Aorta (tissue), 5 donors: ENCODE measurements at regions of chr9 and their contacts with region 1.

Region 1: GRCh38 chr9:38768351-38768761 is 48.4 kb upstream of the FAM240B start:
- DNase-seq: no peak
- ATAC-seq: no peak
- H3K4me3 ChIP-seq: no peak overlapping the region
- H3K27ac ChIP-seq: no peak overlapping the region
- H3K4me1 ChIP-seq: no peaks in the 10 kb centered on the region
- H3K27me3 ChIP-seq: no peaks in the 10 kb centered on the region

Region 2: GRCh38 chr9:37984672-37985611 is 783.4 kb before region 1 on chr9:
- intact Hi-C with region 1: no loop called
- DNase-seq: peak in 1 of 2 donors; percentile 76
- ATAC-seq: peak; percentile 3
- H3K4me3 ChIP-seq: no peak overlapping the region
- H3K27ac ChIP-seq: no peak overlapping the region
- H3K4me1 ChIP-seq: no peaks in the 10 kb centered on the region
- H3K27me3 ChIP-seq: no peaks in the 10 kb centered on the region

Region 3: DNA sequence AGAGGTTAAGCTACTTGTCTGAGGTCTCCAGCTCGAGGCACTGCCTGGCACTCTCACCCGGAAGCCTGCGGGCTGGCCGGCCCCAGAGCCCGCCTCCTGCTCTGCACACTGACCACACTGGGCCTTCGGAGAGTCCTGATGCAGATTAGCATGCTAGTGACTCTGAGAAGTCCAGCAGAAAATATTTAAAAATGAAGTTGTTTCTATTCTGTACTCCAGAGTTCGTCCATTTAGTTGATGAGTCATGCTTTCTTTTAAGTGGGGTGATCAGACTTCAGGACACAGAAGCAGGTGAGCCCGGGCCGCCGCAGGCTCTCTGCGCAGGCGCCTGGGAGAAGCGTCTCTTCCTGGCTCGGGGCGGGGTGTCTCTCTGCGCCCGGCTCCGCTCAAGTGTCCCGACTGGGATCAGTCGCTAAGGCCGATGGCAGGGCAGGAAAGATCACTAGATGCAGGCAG is 80.9 kb before region 1 on chr9:
- intact Hi-C with region 1: no loop called
- DNase-seq: peak; percentile 56 to 80
- ATAC-seq: peak; percentile 57
- H3K4me3 ChIP-seq: no peak overlapping the region
- H3K27ac ChIP-seq: no peak overlapping the region
- H3K4me1 ChIP-seq: no peaks in the 10 kb centered on the region
- H3K27me3 ChIP-seq: no peaks in the 10 kb centered on the region

Region 4: GRCh38 chr9:38732885-38733284 is 35.5 kb before region 1 on chr9:
- intact Hi-C with region 1: no loop called
- DNase-seq: no peak
- ATAC-seq: no peak
- H3K4me3 ChIP-seq: no peak overlapping the region
- H3K27ac ChIP-seq: no peak overlapping the region
- H3K4me1 ChIP-seq: no peaks in the 10 kb centered on the region
- H3K27me3 ChIP-seq: no peaks in the 10 kb centered on the region

Region 5: DNA sequence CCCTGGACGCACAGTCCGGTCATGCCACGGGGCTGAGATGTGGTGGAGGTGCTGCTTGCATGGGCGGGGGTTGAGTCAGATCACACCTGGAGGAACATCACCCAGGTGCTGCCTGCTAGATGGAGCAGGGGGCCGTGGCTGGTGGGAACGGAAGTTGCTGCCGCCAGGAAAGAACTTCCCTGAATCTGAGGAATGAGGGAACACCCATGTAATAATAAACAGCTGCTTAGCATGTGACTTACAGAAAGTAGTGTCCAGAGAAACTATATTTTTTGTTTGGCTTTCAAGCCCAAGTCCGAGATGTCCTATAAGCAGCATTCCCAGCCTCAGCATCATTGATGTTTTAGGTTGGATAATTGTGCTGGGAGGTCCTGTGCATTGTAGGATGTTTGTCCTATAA is 21.3 kb before region 1 on chr9:
- intact Hi-C with region 1: loop called in 1 of 2 experiments (anchors 2 kb)
- DNase-seq: no peak
- ATAC-seq: no peak
- H3K4me3 ChIP-seq: no peak overlapping the region
- H3K27ac ChIP-seq: no peak overlapping the region
- H3K4me1 ChIP-seq: no peaks in the 10 kb centered on the region
- H3K27me3 ChIP-seq: no peaks in the 10 kb centered on the region